Activated CD8-positive, alpha-beta memory T cell treated with anti-CD3 and anti-CD28 coated beads, Interleukin-2, amount 10 ng/mL, durations not matched to agents 7 days and 5 days (primary cell): ENCODE measurements at regions of chr12 and their contacts with region 1.

Region 1: DNA sequence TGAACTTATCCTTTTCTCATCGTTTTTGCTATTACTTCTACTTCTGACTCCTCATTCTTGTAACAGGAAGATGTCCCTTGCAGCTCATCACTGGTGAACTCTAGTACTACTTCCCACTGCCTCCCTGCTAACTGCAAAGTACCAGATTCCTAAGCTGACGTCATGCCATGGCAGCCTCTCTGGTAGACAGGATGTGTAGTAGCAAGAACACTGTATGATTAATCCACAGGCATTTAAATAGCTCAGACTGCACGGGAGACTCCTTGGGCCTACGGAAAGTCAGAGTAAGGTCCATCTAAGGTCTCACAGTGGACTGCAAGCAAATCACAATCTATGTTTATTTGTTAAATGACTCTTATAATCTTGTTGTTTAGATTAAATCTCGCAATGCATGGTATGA is 43.5 kb downstream of the DNAI7 start:
- DNase-seq: no peak
- ATAC-seq: no peak
- H3K4me3 Mint-ChIP-seq: no peak overlapping the region
- H3K27ac Mint-ChIP-seq: no peak overlapping the region
- H3K4me1 Mint-ChIP-seq: peaks cover 9% of the 10 kb centered on the region
- H3K27me3 Mint-ChIP-seq: no peaks in the 10 kb centered on the region

Region 2: DNA sequence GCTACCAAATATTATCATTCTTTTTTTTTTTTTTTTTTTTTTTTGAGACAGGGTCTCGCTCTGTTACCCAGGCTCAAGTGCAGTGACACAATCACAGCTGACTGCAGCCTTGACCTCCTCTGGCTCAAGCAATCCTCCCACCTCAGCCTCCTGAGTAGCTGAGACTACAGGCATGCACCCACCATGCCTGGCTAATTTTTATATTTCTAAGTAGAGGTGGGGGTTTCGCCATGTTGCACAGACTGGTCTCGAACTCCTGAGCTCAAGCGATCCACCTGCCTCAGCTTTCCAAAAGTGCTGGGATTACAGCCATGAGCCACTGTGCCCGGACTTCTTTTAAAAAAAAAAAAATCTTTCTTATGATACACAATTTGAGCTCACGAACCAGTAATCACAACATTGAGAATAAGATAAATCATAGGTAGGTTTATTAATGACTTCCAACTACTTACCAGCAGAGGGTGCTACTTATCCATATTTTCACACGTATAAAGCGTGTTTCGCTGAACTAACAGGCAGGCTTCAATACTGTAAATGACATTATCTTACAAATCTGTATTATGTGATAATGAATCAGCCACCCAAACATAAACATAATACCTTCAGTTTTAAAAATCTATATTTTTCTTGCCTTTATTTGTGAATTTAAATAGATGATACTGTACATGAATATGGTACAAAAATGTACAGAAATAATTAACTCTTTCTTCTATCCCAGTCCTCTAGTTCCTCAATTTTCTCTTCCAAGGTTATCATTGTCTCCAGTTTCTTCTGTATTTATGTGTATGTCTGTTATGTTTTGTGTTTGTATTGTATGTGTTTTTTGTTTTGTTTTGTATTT is 160.0 kb before region 1 on chr12:
- CTCF ChIA-PET with region 1: interaction called, 35 read pairs
- DNase-seq: no peak
- ATAC-seq: peak; percentile 91
- H3K4me3 Mint-ChIP-seq: no peak overlapping the region
- H3K27ac Mint-ChIP-seq: no peak overlapping the region
- H3K4me1 Mint-ChIP-seq: no peaks in the 10 kb centered on the region
- H3K27me3 Mint-ChIP-seq: peaks cover 9% of the 10 kb centered on the region

Region 3: GRCh38 chr12:25041006-25041741 is 110.3 kb before region 1 on chr12:
- CTCF ChIA-PET with region 1: no interaction called
- DNase-seq: no peak
- ATAC-seq: no peak
- H3K4me3 Mint-ChIP-seq: no peak overlapping the region
- H3K27ac Mint-ChIP-seq: no peak overlapping the region
- H3K4me1 Mint-ChIP-seq: peaks cover 8% of the 10 kb centered on the region
- H3K27me3 Mint-ChIP-seq: peaks cover 9% of the 10 kb centered on the region